Activated CD8-positive, alpha-beta memory T cell treated with anti-CD3 and anti-CD28 coated beads, Interleukin-2, amount 10 ng/mL, durations not matched to agents 7 days and 5 days (primary cell): ENCODE measurements at regions of chr15 and their contacts with region 1.

Region 1: GRCh38 chr15:40782580-40783227 is 12.9 kb downstream of the C15orf62 start:
- DNase-seq: peak; percentile 86
- ATAC-seq: peak; percentile 99
- H3K4me3 Mint-ChIP-seq: no peak overlapping the region
- H3K27ac Mint-ChIP-seq: peak overlapping the region; percentile 30
- H3K4me1 Mint-ChIP-seq: peaks cover 18% of the 10 kb centered on the region
- H3K27me3 Mint-ChIP-seq: no peaks in the 10 kb centered on the region

Region 2: GRCh38 chr15:40684381-40684780 is 98.3 kb before region 1 on chr15:
- CTCF ChIA-PET with region 1: interaction called, 22 read pairs
- DNase-seq: no peak
- ATAC-seq: no peak
- H3K4me3 Mint-ChIP-seq: no peak overlapping the region
- H3K27ac Mint-ChIP-seq: no peak overlapping the region
- H3K4me1 Mint-ChIP-seq: no peaks in the 10 kb centered on the region
- H3K27me3 Mint-ChIP-seq: no peaks in the 10 kb centered on the region

Region 3: DNA sequence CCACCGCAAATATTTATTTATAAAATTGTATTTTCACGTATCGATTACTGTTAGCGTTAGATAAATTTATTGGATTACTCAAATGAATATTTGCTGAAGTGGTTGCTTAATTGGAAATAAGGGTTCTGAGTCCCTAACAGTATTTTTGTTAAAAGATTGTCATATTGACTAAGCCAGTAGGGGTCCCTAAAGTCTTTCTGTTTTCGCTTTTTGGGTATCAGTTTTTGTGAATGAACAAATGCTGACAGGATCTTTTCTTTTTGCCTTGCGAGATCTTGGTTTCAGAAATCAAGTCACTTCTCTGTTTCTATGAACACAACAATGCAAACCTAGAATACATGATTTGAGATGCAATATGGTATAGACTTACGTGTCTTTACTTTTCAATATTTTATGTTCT is 80.6 kb before region 1 on chr15:
- CTCF ChIA-PET with region 1: interaction called, 13 read pairs
- DNase-seq: no peak
- ATAC-seq: no peak
- H3K4me3 Mint-ChIP-seq: no peak overlapping the region
- H3K27ac Mint-ChIP-seq: no peak overlapping the region
- H3K4me1 Mint-ChIP-seq: peaks cover 42% of the 10 kb centered on the region
- H3K27me3 Mint-ChIP-seq: no peaks in the 10 kb centered on the region

Region 4: DNA sequence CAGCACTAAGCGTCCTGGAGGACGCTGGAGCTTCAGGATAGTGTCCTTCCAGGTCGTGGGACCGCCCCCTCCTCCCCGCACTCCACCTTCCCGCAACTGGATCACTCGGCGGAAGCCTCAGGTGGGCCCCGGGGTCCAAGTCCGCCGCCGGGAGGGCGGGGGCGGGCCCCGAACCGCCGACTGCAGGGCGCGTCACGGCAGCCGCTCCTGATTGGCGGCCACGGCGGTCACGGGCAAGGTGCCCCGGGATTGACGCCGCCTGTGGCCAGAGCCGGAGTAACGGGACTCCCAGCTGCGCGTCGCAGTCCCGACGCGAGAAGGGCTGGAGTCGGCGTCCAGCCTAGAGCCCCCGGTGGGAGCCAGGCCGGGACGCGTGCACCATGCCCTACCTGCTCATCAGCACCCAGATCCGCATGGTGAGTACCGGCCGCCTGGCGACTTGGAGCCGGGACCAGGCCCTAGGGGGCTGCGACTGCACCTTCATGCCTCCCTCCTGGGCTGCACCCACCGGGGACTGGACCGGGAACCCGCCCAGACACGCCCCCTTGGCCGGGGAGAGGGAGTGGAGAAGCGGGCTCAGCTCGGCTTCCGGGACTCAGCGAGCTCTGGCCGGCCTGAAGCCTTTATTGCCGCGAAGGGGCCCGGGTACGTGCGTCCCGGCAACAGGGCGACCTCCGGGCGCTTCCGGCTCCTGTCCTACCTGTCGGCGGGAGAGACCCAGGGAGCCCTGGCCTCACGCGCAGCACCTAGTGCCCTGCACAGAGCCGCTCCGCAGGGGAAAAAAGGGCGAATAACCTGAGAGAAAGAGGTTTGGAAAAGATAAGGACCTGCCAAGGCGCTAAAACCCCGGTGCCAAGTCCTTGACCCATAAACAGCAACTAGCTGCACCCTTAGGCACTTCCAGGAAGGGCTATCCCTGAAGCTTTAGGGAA is 18.6 kb before region 1 on chr15 and contains the start of gene GCHFR:
- CTCF ChIA-PET with region 1: interaction called, 26 read pairs
- DNase-seq: peak; percentile 81
- ATAC-seq: peak; percentile 65
- H3K4me3 Mint-ChIP-seq: peak within 1 kb of the TSS; percentile 81
- H3K27ac Mint-ChIP-seq: peak within 1 kb of the TSS; percentile 91
- H3K4me1 Mint-ChIP-seq: peaks cover 41% of the 10 kb centered on the region
- H3K27me3 Mint-ChIP-seq: no peaks in the 10 kb centered on the region
- total RNA-seq, gene GCHFR: 25.9 to 29.1 TPM

Region 5: DNA sequence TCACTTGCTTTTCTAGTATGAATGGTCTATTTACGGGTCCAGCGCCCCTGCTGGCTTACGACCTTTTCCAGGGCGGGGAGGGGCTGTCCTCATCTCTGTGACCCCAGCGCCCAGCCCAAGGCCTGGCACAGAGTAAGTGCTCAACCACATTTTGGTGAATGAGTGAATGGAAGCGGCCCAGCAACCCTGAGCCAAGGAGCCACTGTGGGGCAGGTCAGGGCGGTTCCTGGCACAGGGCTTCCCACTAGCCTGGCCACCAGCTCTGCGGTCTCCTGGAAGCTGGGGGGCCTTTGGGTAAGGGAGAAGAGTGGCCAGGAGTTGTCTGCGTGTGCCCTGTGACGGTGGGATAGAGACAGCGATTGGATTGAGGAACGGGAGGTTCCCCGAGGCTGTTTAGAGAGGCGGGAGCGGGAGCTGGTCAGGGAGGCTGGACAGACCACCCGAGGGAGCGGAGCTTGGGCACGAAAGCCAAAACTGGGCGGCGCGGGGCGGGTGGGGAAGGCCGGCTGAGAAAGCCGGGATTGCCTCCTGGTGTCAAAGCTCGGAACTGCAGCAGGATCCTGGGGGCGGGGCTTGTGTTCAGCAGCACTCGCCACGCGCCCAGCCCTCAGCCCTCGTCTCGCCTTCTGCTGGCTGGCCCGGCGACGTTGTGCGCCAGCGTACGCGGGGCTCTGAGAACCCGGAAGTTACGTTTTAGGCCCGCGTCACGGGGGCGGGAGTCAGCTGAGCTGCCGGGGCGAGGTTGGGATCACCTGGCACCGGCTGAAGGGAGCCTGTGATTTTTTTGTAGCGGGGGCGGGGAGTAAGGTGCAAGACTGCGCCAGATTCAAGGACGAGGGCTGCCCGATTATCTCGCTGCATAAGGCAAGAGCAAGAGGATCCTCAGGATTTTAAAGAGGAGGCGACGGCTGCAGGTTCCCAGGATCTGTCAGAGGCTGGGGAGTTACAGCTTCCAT is 111.3 kb after region 1 on chr15 and contains the start of gene VPS18:
- CTCF ChIA-PET with region 1: interaction called, 24 read pairs
- DNase-seq: peak; percentile 99
- ATAC-seq: peak; percentile 98
- H3K4me3 Mint-ChIP-seq: peak within 1 kb of the TSS; percentile 98
- H3K27ac Mint-ChIP-seq: peak within 1 kb of the TSS; percentile 94
- H3K4me1 Mint-ChIP-seq: peaks cover 32% of the 10 kb centered on the region
- H3K27me3 Mint-ChIP-seq: no peaks in the 10 kb centered on the region
- total RNA-seq, gene VPS18: 16.9 to 19.5 TPM